A549 (cell line): ENCODE measurements at regions of chr3 and their contacts with region 1.

Region 1: DNA sequence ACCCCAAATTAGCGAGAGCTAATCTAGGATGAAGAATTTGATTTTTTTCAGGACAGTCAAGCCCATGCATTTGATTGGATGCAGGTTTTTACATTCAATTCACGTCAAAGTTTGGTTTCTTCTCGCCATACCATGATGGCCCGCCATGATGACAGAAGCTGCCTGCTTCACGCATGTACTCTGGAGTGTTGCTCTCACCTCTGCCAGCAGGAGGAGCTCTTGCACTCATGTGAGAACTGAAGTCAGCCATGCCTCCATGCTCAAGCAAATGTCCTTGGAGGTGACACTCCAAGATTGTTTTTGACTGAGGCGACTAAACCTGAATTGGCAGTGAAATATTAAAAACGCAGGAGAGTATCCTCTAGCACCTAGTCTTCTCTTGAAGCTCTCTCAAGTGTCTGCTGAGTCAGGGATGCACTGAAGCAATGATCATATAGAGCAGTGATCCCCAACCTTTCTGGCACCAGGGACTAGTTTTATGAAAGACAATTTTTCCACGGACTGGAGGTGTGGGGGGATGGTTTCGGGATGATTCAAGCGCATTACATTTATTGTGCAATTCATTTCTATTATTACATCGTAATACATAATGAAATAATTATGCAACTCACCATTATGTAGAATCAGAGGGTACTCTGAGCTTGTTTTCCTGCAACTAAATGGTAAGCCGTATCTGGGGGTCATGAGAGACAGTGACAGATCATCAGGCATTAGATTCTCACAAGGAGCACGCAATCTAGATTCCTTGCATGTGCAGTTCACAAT is 121.0 kb downstream of the SAMMSON start:
- DNase-seq: peak; percentile 56 to 90
- ATAC-seq: peak; percentile 92 to 99
- H3K4me3 ChIP-seq: no peak overlapping the region
- H3K27ac ChIP-seq: no peak overlapping the region
- H3K4me1 ChIP-seq: no peaks in the 10 kb centered on the region
- CTCF ChIP-seq: peak; percentile 79
- EP300 ChIP-seq: no peak
- POLR2A ChIP-seq: no peak
- RAD21 ChIP-seq: peak; percentile 88 to 96

Region 2: GRCh38 chr3:70137366-70137765 is 16.8 kb after region 1 on chr3:
- CTCF ChIA-PET with region 1: interaction called, 27 read pairs
- POLR2A ChIA-PET with region 1: no interaction called
- DNase-seq: no peak
- ATAC-seq: no peak
- H3K4me3 ChIP-seq: no peak overlapping the region
- H3K27ac ChIP-seq: no peak overlapping the region
- H3K4me1 ChIP-seq: peaks cover 13% of the 10 kb centered on the region; the same call in 2 of the 3 replicates
- CTCF ChIP-seq: no peak
- EP300 ChIP-seq: no peak
- POLR2A ChIP-seq: no peak
- RAD21 ChIP-seq: no peak

Region 3: DNA sequence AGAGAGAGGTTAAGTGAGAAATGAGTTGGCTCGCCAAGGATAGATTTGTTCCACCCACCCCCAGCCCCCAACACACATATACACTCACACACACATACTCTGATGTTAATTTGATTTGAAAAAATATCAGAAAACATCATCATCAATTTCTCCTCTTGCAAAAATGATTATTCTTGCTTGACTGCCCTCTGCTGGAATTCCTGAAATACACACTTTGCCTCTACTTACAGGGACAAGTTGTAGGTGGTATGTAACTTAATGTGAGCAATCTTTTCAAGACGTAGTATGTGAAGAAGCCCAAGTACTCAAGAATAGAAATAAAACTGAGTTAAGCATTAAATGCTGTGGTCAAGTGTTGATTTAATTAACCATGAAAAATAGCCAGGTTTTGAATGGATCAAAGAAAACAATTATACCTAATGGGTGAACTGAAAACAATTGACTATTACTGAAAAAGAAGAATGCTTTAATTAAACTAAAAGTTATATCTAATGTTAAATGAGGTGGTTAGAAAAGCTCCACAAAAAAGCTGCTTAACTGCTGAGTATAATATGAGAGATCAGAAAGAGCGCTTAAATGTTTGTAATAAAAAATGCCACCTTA is 238.5 kb after region 1 on chr3:
- CTCF ChIA-PET with region 1: interaction called, 36 read pairs
- POLR2A ChIA-PET with region 1: no interaction called
- DNase-seq: peak; percentile 3 to 54
- ATAC-seq: peak in 1 of 2 experiments; percentile 49; a peak in 1 of 6 replicates
- H3K4me3 ChIP-seq: no peak overlapping the region
- H3K27ac ChIP-seq: no peak overlapping the region
- H3K4me1 ChIP-seq: peaks cover 5% of the 10 kb centered on the region; the same call in 2 of the 3 replicates
- CTCF ChIP-seq: peak; percentile 80
- EP300 ChIP-seq: no peak
- POLR2A ChIP-seq: no peak
- RAD21 ChIP-seq: peak; percentile 80 to 81

Region 4: DNA sequence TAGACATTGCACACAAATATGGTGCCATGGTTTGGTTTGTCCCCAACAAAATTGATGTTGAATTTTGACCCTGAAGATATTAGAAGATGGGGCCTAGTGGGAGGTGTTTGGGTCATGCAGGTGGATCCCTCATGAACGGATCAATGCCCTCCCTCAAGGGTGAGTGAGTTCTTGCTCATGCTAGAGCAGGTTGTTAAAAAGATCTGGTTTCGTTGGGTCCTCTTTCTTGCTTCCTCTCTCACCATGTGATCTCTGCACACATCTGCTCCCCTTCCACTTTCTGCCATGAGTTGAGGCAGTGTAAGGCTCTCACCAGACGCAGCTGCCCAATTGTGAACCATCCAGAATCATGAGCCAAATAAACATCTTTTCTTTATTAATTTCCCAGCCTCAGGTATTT is 279.7 kb after region 1 on chr3:
- CTCF ChIA-PET with region 1: no interaction called
- POLR2A ChIA-PET with region 1: no interaction called
- DNase-seq: no peak
- ATAC-seq: no peak
- H3K4me3 ChIP-seq: no peak overlapping the region
- H3K27ac ChIP-seq: no peak overlapping the region
- H3K4me1 ChIP-seq: no peaks in the 10 kb centered on the region
- CTCF ChIP-seq: no peak
- EP300 ChIP-seq: no peak
- POLR2A ChIP-seq: no peak
- RAD21 ChIP-seq: no peak